ENCODE measurements at regions of chr17 and their contacts with region 1.

Region 1: GRCh38 chr17:74212913-74213791 is at the start of gene TTYH2:
- DNase-seq: peak; percentile 90 to 95 (median 95)
- ATAC-seq: peak; percentile 85 to 90
- H3K4me3 ChIP-seq: peak within 1 kb of the TSS; percentile 62
- H3K27ac ChIP-seq: peak within 1 kb of the TSS; percentile 86
- H3K4me1 ChIP-seq: peaks cover 7% of the 10 kb centered on the region
- H3K27me3 ChIP-seq: no peaks in the 10 kb centered on the region
- total RNA-seq, gene TTYH2: 16.7 to 30.4 (median 24.9) TPM

Region 2: GRCh38 chr17:74118504-74118903 is 94.6 kb before region 1 on chr17:
- intact Hi-C with region 1: no loop called
- DNase-seq: no peak
- ATAC-seq: no peak
- H3K4me3 ChIP-seq: no peak overlapping the region
- H3K27ac ChIP-seq: no peak overlapping the region
- H3K4me1 ChIP-seq: no peaks in the 10 kb centered on the region
- H3K27me3 ChIP-seq: no peaks in the 10 kb centered on the region

Region 3: GRCh38 chr17:74152591-74153455 is 60.3 kb before region 1 on chr17:
- intact Hi-C with region 1: no loop called
- DNase-seq: no peak
- ATAC-seq: no peak
- H3K4me3 ChIP-seq: no peak overlapping the region
- H3K27ac ChIP-seq: no peak overlapping the region
- H3K4me1 ChIP-seq: no peaks in the 10 kb centered on the region
- H3K27me3 ChIP-seq: no peaks in the 10 kb centered on the region

Region 4: GRCh38 chr17:74296548-74296936 is 83.4 kb after region 1 on chr17:
- intact Hi-C with region 1: loop called (anchors 2 to 10 kb)
- DNase-seq: peak; percentile 73 to 91 (median 82)
- ATAC-seq: peak; percentile 72 to 84
- H3K4me3 ChIP-seq: no peak overlapping the region
- H3K27ac ChIP-seq: peak overlapping the region; percentile 92
- H3K4me1 ChIP-seq: peaks cover 3% of the 10 kb centered on the region
- H3K27me3 ChIP-seq: no peaks in the 10 kb centered on the region

Region 5: DNA sequence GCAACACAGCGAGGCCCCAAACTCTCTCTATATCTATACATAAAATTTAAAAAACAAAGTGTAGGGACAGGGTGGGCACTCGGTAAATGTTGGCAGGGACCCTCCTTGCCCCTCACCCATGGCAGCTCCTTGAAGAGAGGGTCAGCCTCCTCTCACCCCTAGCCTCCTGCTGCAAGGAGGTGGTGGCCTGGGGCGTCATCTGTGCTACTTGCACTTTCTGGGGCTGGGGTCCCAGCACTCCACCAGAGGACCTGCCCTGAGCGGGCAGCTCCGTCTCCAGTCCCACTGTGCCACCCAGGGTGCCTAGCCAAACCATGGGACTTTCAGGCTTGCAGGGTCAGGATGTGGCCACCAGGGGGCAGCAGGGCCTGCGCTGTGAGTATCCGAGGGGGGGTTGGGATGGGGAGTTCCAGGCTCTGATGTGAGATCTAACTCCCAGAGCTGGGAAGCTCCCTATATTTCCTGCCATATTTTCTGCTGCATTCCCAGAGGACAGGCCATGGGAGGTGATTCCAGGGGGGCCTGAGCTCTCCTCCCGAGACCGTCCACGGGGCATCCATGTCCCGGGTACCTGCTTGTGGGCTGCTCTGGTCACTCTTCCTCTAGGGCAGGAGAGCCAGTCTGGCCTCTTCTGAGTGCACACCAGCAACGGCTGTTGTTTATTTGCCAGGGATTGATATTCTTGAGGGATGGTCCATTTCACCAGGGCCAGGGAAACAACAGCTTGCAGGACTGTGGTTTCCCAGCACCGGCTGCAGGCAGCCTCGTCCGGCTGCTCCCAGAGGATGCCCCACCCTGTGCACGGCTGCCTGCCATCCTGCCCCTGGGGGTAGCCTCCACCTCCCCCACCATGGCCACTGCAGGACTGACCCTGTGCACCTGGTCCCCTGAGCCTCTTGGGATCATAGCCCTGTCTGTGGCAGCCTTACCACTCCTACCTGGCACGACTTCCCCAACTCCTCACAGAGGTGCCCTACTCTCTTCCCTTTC is 155.2 kb after region 1 on chr17:
- intact Hi-C with region 1: loop called in 3 of 4 experiments (anchors 5 to 10 kb)
- DNase-seq: peak; percentile 68 to 90 (median 88)
- ATAC-seq: peak; percentile 70 to 83
- H3K4me3 ChIP-seq: no peak overlapping the region
- H3K27ac ChIP-seq: no peak overlapping the region
- H3K4me1 ChIP-seq: no peaks in the 10 kb centered on the region
- H3K27me3 ChIP-seq: no peaks in the 10 kb centered on the region

Region 6: DNA sequence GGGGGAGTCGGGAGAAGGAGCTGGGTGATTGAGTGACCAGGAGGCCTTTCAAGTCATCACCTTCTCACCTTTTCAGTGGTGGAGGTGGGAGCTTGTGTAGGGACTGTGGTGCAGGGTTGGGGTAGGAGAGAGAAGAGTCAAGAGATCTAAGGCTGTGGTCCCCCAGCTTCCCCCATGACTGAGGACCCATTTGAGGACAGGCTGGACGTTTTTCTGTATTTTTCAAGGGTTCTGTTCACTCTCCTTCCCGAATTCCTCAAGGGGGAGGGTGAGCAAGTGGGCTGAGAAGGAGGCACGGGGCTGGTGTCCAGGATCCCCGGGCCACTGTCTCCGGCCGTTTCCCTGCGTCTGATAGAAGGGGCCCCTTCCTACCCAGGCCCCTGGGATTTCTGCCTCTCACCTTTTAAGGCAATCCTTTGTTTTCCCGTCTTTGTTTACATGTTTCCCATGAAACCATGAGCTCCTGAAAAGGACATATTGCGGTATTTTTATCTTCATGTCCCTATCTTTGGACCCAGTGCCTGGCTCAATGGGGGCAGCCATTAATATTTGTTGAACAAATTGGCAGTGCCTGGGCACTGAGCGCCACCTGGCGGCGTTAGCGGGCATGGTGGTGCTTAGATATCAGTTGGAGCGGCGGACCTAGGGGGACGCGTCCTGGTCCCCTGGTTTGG is 244.1 kb after region 1 on chr17:
- intact Hi-C with region 1: loop called in 1 of 4 experiments (anchors 10 kb)
- DNase-seq: peak; percentile 82 to 94 (median 93)
- ATAC-seq: peak in 1 of 2 donors; percentile 13
- H3K4me3 ChIP-seq: no peak overlapping the region
- H3K27ac ChIP-seq: no peak overlapping the region
- H3K4me1 ChIP-seq: peaks cover 15% of the 10 kb centered on the region
- H3K27me3 ChIP-seq: no peaks in the 10 kb centered on the region

Region 7: DNA sequence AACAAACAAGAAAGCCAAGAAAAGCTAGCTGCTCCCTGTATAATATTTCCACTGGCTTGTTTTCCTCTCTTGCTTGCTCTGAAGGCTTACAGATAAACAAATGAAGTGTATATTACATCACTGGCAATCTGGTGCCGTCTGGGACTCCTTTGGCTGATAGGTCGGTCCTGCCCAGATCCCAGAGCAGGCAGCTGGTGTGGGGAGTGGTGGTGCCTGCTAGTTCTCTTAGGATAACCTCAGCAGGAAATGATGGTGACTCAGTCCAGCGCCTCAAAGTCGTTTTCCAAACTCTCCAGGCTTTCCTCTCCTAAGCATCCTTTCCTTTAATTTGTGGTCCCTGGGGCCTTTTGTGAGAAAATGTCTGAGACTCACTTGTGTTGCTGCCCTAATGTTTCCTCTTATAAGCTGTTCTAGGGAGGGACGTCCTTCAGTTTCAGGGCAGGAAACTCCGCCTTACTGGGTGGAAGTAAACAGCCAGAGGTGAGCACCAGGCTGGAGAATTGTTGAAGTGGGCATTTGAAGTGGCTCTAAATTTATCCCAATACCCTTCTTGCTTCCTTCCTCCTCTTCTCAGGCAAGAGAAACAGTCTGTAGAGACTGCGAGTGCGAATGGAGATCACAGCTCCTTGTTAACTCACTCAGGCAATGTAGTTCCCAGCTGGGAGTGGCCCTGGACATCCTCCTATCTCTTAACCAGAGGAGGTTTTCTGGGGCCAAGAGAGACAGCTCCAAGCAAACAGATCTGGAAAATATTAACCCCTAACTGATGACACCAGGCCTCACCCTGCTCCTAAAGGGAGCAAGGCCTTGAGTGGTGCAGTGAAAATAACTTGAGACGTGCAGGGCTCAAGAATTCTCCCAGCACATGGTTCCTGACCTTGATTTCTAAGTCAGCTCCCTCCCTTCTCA is 464.7 kb after region 1 on chr17:
- intact Hi-C with region 1: no loop called
- DNase-seq: peak; percentile 65 to 86 (median 75)
- ATAC-seq: peak; percentile 92 to 97
- H3K4me3 ChIP-seq: no peak overlapping the region
- H3K27ac ChIP-seq: no peak overlapping the region
- H3K4me1 ChIP-seq: no peaks in the 10 kb centered on the region
- H3K27me3 ChIP-seq: no peaks in the 10 kb centered on the region

Measured in right cardiac atrium (tissue), 5 donors.